Colonic mucosa (tissue), 4 donors: ENCODE measurements at regions of chr18 and their contacts with region 1.

Region 1: GRCh38 chr18:22983175-22983574 is 50.0 kb downstream of the RBBP8 start:
- DNase-seq: no peak
- H3K4me3 ChIP-seq: no peak overlapping the region
- H3K27ac ChIP-seq: no peak overlapping the region
- H3K4me1 ChIP-seq: no peaks in the 10 kb centered on the region
- H3K27me3 ChIP-seq: no peaks in the 10 kb centered on the region
- CTCF ChIP-seq: peak; percentile 44

Region 2: DNA sequence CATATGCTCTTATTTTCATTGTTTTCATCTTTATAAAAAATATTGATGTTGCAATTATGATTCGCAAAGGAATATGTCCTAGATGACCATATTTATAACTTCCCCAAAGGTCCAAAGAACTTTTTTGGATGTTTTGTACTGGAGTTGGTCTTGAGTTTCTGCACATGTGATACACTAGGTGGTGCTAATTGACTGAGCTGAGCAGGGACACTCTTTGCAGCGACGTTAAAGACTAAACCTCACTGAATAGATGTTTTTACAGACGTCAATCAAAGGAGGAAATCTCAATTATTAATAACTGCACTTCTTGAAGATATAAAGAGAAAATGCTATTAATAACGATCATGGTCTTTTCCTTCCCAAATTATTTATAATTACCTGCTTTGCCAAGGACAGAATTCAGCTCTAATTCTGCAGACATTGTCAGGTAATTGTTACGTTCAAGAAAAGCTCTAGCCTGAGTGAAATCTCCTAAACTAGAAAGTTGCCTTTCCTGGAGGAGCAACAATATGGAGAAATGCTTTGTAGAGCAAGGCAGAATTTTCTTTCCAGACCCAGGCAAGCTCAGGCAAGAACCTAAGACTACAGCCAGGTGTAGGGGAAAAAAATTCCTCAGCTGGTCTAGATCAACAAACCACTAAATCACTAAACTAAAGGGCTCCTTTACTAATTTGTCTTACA is 169.4 kb before region 1 on chr18:
- intact Hi-C with region 1: loop called (anchors 5 kb)
- DNase-seq: no peak
- H3K4me3 ChIP-seq: no peak overlapping the region
- H3K27ac ChIP-seq: no peak overlapping the region
- H3K4me1 ChIP-seq: peaks cover 5% of the 10 kb centered on the region
- H3K27me3 ChIP-seq: no peaks in the 10 kb centered on the region
- CTCF ChIP-seq: peak; percentile 47

Region 3: DNA sequence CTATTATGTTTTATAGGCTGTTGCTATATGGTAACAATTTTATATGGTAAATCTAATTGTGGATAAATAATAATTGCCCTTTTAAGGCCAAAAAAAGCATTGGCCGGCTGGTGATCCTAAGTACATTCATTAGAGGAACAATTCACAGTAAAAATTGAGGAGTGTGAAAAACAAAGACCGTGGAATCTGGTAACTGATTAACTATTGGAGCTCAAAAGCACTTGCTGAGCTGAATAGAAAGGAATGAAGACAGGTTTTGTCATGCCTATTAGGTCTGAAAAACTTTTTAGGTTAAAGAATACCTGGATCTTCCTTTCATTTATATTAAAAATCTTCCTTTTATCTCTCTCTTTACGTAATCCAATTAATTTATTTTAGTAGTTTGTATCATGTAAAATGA is 68.5 kb before region 1 on chr18:
- intact Hi-C with region 1: no loop called
- DNase-seq: no peak
- H3K4me3 ChIP-seq: no peak overlapping the region
- H3K27ac ChIP-seq: no peak overlapping the region
- H3K4me1 ChIP-seq: no peaks in the 10 kb centered on the region
- H3K27me3 ChIP-seq: no peaks in the 10 kb centered on the region
- CTCF ChIP-seq: no peak

Region 4: DNA sequence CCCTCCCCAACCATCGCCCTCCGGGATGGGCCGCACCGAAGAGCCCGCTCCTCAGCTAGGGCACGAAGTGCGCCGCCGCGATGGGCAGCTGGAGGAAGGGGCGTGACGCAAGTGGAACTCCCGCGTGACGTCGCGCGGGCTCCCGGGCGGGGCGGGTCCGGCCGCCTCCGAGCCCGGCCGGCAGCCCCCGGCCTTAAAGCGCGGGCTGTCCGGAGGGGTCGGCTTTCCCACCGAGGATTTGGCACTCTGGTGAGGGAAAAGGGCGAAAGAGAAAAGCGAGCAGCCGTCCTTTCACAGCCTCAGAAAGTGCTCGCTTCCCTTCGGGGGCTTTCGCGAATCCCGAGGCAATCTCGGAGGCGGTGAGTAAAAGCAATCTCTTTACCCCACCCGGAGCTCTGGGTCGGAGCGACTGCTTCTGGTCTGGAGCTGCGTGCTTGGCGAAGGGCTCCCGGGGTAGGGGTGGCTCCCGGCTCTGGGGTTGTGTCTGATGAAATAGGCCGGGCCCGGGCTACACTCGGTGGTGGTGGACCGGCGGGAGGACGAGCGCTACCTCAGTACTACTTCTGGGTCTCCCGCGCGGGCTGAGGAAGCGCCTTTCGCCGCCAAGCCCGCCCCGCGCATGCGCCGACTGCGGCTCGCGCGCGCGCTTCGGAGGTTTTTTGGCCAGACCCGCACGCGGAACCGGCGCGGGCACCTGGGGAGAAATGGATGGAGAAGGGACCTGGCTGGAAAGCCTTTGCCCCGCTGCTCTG is 49.8 kb before region 1 on chr18 and contains the start of gene RBBP8:
- intact Hi-C with region 1: loop called (anchors 5 kb)
- DNase-seq: peak; percentile 89
- H3K4me3 ChIP-seq: peak within 1 kb of the TSS; percentile 54
- H3K27ac ChIP-seq: peak within 1 kb of the TSS; percentile 82
- H3K4me1 ChIP-seq: no peaks in the 10 kb centered on the region
- H3K27me3 ChIP-seq: no peaks in the 10 kb centered on the region
- CTCF ChIP-seq: no peak
- total RNA-seq, gene RBBP8: 24.4 to 29.5 TPM